Left ventricle myocardium inferior (tissue), 1 donor: ENCODE measurements at regions of chr6 and their contacts with region 1.

Region 1: GRCh38 chr6:30721198-30722024 is 1.3 kb downstream of the TUBB start:
- DNase-seq: peak; percentile 93
- H3K4me3 ChIP-seq: peak overlapping the region; percentile 95
- H3K27ac ChIP-seq: peak overlapping the region; percentile 98
- H3K4me1 ChIP-seq: peaks cover 88% of the 10 kb centered on the region
- H3K27me3 ChIP-seq: no peaks in the 10 kb centered on the region
- CTCF ChIP-seq: peak; percentile 67

Region 2: DNA sequence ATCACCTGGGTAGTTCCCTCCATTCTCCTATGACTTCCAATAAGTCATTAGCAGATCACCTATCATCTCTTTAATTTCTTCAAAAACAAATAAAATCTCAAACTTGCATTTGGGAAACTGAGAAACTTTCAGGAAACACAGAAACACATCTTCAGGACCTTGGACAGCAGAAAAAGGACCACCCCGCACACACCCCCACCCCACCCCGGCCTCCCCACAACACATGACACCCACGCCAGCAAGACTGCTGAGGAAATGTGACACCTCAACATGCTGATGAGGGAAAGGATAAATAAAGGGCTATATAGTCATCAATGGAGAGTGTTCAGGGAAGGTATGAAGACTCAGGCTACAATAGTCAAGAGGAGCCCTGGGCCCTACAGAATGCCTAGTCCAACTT is 410.3 kb before region 1 on chr6:
- intact Hi-C with region 1: no loop called
- DNase-seq: no peak
- H3K4me3 ChIP-seq: no peak overlapping the region
- H3K27ac ChIP-seq: no peak overlapping the region
- H3K4me1 ChIP-seq: no peaks in the 10 kb centered on the region
- H3K27me3 ChIP-seq: no peaks in the 10 kb centered on the region
- CTCF ChIP-seq: no peak

Region 3: GRCh38 chr6:30678964-30679726 is 42.3 kb before region 1 on chr6:
- intact Hi-C with region 1: loop called (anchors 2 kb)
- DNase-seq: peak; percentile 88
- H3K4me3 ChIP-seq: peak overlapping the region; percentile 83
- H3K27ac ChIP-seq: peak overlapping the region; percentile 43
- H3K4me1 ChIP-seq: peaks cover 57% of the 10 kb centered on the region
- H3K27me3 ChIP-seq: no peaks in the 10 kb centered on the region
- CTCF ChIP-seq: peak; percentile 98